Caco-2 (cell line): ENCODE measurements at regions of chr6 and their contacts with region 1.

Region 1: DNA sequence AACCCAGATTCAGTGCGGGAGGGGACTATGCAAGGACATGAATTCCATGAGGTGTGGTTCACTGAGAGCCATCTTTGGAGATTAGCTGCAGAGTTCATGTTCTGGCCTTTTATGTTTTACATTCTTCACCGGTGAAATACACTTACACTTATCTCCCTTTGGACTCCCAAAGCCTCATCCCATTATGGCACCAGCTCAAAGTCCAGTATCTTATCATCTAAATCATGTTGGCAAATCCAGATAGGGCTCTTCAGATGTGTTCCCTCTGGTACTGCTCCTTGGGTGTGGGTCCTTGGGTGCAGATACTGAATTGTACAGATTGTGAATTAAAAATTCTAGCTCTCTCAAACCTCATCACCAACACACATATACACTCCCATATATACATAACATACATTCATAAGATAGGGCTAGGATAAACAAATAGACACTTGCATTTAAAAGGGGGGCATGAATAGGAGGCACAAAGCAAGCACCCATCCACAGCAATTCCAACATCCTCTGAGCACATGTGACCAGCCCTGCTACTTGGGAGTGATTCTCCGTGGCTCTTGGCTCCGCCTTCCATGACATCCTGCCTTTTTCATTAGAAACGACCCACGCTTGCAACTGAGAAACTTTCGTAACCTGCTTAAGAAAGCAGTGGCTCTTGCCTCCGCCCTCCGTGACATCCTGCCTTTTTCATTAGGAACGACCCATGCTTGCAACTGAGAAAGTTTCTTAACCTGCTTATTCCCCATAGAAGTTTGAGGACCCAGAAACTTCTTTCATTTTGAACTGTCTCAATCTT is 53.6 kb upstream of the LRRC1 start:
- DNase-seq: peak; percentile 79 to 89
- H3K4me3 ChIP-seq: peak overlapping the region; percentile 15; the same call in 1 of the 2 replicates
- H3K4me3 Mint-ChIP-seq: peak overlapping the region; percentile 64
- H3K27ac Mint-ChIP-seq: peak overlapping the region; percentile 73
- H3K4me1 ChIP-seq: peaks cover 71% of the 10 kb centered on the region
- H3K4me1 Mint-ChIP-seq: peaks cover 27% of the 10 kb centered on the region
- H3K27me3 ChIP-seq: no peaks in the 10 kb centered on the region
- H3K27me3 Mint-ChIP-seq: no peaks in the 10 kb centered on the region
- CTCF ChIP-seq: no peak

Region 2: GRCh38 chr6:53754330-53754729 is 13.1 kb after region 1 on chr6:
- CTCF ChIA-PET with region 1: no interaction called
- POLR2A ChIA-PET with region 1: no interaction called
- intact Hi-C with region 1: no loop called
- DNase-seq: no peak
- H3K4me3 ChIP-seq: no peak overlapping the region
- H3K4me3 Mint-ChIP-seq: no peak overlapping the region
- H3K27ac Mint-ChIP-seq: no peak overlapping the region
- H3K4me1 ChIP-seq: 0 out of 2 replicates have a peak, but pooled peaks cover 5% of the 10 kb centered on the region
- H3K4me1 Mint-ChIP-seq: peaks cover 8% of the 10 kb centered on the region
- H3K27me3 ChIP-seq: no peaks in the 10 kb centered on the region
- H3K27me3 Mint-ChIP-seq: no peaks in the 10 kb centered on the region
- CTCF ChIP-seq: no peak

Region 3: DNA sequence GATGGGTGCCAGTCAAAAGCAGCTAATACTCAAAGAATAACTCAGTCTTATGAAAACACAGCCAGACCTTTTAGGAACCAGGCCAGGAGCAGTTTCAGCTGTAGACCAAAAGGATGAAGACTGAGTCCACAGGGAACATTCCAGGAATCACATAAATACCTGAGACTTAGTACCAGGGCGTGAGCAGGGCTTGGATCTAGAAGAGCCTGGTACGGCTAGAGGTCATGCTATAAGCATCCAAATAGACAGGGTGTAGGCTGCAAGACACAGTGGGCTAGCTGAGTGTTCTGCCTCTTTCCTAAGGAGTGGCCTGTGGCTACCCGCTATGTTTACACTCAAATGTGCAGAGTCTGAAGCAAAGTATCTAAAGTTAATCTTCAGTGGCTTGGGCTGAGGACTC is 24.0 kb after region 1 on chr6:
- CTCF ChIA-PET with region 1: no interaction called
- POLR2A ChIA-PET with region 1: interaction called, 6 read pairs
- intact Hi-C with region 1: loop called (anchors 1 kb)
- DNase-seq: peak; percentile 61 to 81
- H3K4me3 ChIP-seq: no peak overlapping the region
- H3K4me3 Mint-ChIP-seq: peak overlapping the region; percentile 52
- H3K27ac Mint-ChIP-seq: peak overlapping the region; percentile 69
- H3K4me1 ChIP-seq: peaks cover 54% of the 10 kb centered on the region
- H3K4me1 Mint-ChIP-seq: peaks cover 47% of the 10 kb centered on the region
- H3K27me3 ChIP-seq: no peaks in the 10 kb centered on the region
- H3K27me3 Mint-ChIP-seq: no peaks in the 10 kb centered on the region
- CTCF ChIP-seq: no peak